ENCODE measurements at regions of chr17 and their contacts with region 1.

Region 1: GRCh38 chr17:73092523-73093135 is at the start of gene SLC39A11:
- DNase-seq: peak; percentile 72 to 95 (median 87)
- ATAC-seq: peak; percentile 96
- H3K4me3 ChIP-seq: peak within 1 kb of the TSS; percentile 77
- H3K4me3 Mint-ChIP-seq: peak within 1 kb of the TSS; percentile 91
- H3K27ac ChIP-seq: peak within 1 kb of the TSS in 1 of 2 donors; percentile 18
- H3K27ac Mint-ChIP-seq: peak within 1 kb of the TSS; percentile 80
- H3K4me1 ChIP-seq: peaks cover 24% of the 10 kb centered on the region
- H3K4me1 Mint-ChIP-seq: peaks cover 36% of the 10 kb centered on the region
- H3K27me3 ChIP-seq: peaks cover 0 to 4% of the 10 kb centered on the region in 2 experiments
- H3K27me3 Mint-ChIP-seq: no peaks in the 10 kb centered on the region
- CTCF ChIP-seq: no peak
- total RNA-seq, gene SLC39A11: 9.7 to 12.2 TPM

Region 2: DNA sequence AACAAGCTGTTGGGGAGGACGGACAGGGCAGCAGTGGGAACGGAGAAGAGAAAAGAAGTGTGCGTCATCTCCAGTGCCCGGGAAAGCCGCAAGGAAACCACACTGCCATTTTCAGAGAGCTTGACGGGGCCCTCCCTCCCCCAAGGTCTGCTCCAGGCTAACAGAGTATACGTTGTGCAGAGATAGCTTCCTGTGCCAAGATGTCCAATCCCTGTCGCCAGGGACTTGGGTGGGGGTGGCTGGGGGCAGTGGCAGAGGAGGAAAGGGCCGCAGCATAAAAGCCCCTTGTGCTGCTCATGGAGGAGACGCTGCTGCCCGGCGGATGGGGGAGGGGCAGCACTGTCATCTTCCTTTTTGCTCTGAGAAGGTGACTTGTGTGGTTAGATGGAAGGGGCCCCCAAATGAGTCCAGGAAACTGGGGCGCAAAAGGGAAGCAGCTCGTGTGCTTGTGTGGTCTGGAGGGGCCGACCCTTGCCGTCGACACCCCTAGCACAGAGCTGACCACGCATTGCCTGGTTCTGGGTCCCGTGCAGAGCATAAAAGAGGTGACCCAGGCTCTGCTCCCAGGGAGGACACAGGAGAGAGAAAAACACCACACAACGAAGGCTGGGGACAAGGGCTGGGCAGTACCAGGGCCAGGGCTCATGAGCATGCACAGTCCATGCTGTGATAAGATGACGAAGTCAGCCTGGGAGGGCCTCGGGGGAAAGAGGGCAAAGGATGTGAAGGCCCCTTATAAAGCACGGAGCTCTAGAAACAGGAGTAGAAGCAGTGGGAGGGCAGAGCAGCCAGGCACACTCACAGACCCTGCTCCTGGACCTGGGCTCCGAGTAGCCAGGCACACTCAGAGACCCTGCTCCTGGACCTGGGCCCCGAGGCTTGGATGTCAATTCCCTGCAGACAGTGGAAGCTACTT is 372.8 kb before region 1 on chr17:
- CTCF ChIA-PET with region 1: no interaction called
- POLR2A ChIA-PET with region 1: no interaction called
- intact Hi-C with region 1: loop called in 1 of 2 experiments (anchors 5 kb)
- DNase-seq: peak; percentile 12 to 73 (median 40)
- ATAC-seq: peak; percentile 89
- H3K4me3 ChIP-seq: peak overlapping the region; percentile 45
- H3K4me3 Mint-ChIP-seq: peak overlapping the region; percentile 78
- H3K27ac ChIP-seq: no peak overlapping the region
- H3K27ac Mint-ChIP-seq: peak overlapping the region; percentile 73
- H3K4me1 ChIP-seq: peaks cover 23% of the 10 kb centered on the region
- H3K4me1 Mint-ChIP-seq: peaks cover 26% of the 10 kb centered on the region
- H3K27me3 ChIP-seq: no peaks in the 10 kb centered on the region
- H3K27me3 Mint-ChIP-seq: no peaks in the 10 kb centered on the region
- CTCF ChIP-seq: no peak

Region 3: DNA sequence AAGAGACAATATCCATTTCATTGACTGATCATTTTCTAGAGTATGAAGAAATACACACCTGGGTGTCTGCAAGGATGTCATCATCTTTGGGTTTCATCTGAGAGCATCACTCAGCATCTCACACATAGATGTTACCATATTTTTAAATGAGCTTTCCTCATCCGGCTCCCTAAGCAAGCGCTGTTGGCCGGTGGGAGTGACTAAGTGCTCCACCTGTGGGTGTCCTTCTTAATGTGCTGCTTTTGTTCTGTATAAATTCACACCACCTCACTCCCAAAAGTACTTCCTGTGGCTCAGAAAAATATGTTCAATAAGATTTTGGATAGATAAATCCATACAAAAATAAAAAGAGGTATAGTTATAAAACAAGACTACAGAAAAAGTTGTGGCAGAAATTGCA is 79.6 kb after region 1 on chr17:
- CTCF ChIA-PET with region 1: no interaction called
- POLR2A ChIA-PET with region 1: no interaction called
- intact Hi-C with region 1: no loop called
- DNase-seq: no peak
- ATAC-seq: peak; percentile 23
- H3K4me3 ChIP-seq: no peak overlapping the region
- H3K4me3 Mint-ChIP-seq: no peak overlapping the region
- H3K27ac ChIP-seq: no peak overlapping the region
- H3K27ac Mint-ChIP-seq: peak overlapping the region; percentile 76
- H3K4me1 ChIP-seq: peaks cover 9% of the 10 kb centered on the region
- H3K4me1 Mint-ChIP-seq: peaks cover 13% of the 10 kb centered on the region
- H3K27me3 ChIP-seq: peaks cover under 1 to 14% of the 10 kb centered on the region in 2 experiments
- H3K27me3 Mint-ChIP-seq: peaks cover 22% of the 10 kb centered on the region
- CTCF ChIP-seq: no peak